ENCODE measurements at regions of chr3 and their contacts with region 1.

Region 1: DNA sequence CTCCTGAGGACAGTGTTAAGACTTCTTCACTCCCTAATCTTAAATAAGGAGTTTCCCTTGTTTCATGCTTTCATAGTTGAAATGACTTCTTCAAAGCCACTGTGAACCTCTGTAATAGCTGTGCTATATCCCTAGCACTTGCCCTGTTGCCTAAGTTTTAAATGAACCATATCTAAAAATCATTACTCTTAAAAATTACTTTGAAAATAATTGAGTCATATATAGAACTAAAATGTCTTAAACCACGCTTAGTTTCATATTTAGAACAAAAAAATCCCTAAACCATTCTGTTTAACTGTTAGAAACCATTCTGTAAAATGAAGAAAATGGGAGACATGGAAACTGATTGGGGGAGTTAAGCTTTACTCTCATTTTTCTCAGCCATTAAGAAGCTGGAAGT is 29.8 kb downstream of the DNAJC19 start:
- DNase-seq: no peak
- H3K4me3 ChIP-seq: no peak overlapping the region
- H3K27ac ChIP-seq: no peak overlapping the region
- H3K4me1 ChIP-seq: no peaks in the 10 kb centered on the region
- CTCF ChIP-seq: no peak

Region 2: GRCh38 chr3:180947761-180948633 is 11.7 kb before region 1 on chr3:
- CTCF ChIA-PET with region 1: no interaction called
- POLR2A ChIA-PET with region 1: interaction called, 21 read pairs
- intact Hi-C with region 1: no loop called
- DNase-seq: peak; percentile 30
- H3K4me3 ChIP-seq: no peak overlapping the region
- H3K27ac ChIP-seq: no peak overlapping the region
- H3K4me1 ChIP-seq: no peaks in the 10 kb centered on the region
- CTCF ChIP-seq: no peak

Region 3: DNA sequence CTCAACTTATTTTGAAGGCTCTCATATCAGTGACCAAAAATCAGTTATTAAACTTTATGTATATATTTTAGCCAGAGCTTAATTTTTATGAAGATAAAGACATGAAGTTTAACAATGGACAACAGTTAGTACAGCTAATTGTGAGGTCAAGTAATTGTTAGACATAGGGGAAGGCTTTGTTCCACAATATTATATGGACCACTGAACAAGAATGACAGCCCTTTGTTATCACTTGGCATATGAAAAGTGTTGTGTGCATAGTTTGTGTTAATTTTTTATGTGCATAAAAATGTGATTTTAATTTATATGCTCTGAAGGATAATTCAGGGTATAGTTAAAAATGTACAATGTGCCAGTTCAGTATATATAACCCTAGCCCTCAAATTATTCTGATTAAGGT is 17.8 kb after region 1 on chr3:
- CTCF ChIA-PET with region 1: no interaction called
- POLR2A ChIA-PET with region 1: interaction called, 5 read pairs
- intact Hi-C with region 1: loop called (anchors 2 kb)
- DNase-seq: no peak
- H3K4me3 ChIP-seq: no peak overlapping the region
- H3K27ac ChIP-seq: no peak overlapping the region
- H3K4me1 ChIP-seq: no peaks in the 10 kb centered on the region
- CTCF ChIP-seq: no peak

Region 4: GRCh38 chr3:181066143-181067087 is 106.7 kb after region 1 on chr3:
- CTCF ChIA-PET with region 1: no interaction called
- POLR2A ChIA-PET with region 1: no interaction called
- intact Hi-C with region 1: no loop called
- DNase-seq: no peak
- H3K4me3 ChIP-seq: no peak overlapping the region
- H3K27ac ChIP-seq: no peak overlapping the region
- H3K4me1 ChIP-seq: no peaks in the 10 kb centered on the region
- CTCF ChIP-seq: no peak

Region 5: GRCh38 chr3:181265717-181266333 is 306.1 kb after region 1 on chr3:
- CTCF ChIA-PET with region 1: no interaction called
- POLR2A ChIA-PET with region 1: no interaction called
- intact Hi-C with region 1: no loop called
- DNase-seq: peak; percentile 16
- H3K4me3 ChIP-seq: peak overlapping the region; percentile 32
- H3K27ac ChIP-seq: no peak overlapping the region
- H3K4me1 ChIP-seq: no peaks in the 10 kb centered on the region
- CTCF ChIP-seq: no peak